Lower leg skin (tissue), 4 donors: ENCODE measurements at regions of chr9 and their contacts with region 1.

Region 1: DNA sequence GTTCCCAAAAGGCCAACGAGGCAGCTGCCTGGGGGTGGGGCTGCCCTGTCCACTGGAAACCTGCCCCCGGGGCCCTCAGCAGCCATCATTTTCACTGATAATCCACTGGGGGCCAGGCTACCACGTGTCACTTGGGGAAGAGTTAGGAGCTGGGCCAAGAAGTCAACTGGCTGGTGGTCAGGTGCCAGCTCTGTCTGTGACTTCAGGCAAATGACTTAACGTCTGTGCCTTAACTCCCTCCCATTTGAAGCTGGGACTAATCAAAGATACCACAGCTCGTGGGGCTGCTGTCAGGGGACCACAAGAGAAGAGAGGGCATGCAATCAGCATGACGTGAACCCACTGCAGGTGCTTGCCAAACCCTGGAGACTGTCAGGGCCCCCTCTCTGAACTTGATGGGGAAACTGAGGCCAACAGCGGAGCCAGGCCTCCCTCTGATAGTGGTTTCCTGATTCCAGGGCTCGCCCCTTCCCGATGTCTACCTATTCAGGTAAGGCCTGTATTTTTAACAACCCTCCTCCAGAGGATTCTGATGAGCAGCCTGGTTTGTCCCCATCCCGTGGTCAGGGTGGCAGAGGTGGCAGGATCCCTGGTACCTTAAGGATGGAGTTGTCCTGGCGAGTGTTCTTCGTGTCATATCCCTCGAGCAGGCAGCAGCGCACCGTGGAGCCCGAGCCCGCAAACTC is 12.3 kb upstream of the DPM2 start:
- DNase-seq: no peak
- H3K4me3 ChIP-seq: no peak overlapping the region
- CTCF ChIP-seq: no peak
- POLR2A ChIP-seq: no peak

Region 2: DNA sequence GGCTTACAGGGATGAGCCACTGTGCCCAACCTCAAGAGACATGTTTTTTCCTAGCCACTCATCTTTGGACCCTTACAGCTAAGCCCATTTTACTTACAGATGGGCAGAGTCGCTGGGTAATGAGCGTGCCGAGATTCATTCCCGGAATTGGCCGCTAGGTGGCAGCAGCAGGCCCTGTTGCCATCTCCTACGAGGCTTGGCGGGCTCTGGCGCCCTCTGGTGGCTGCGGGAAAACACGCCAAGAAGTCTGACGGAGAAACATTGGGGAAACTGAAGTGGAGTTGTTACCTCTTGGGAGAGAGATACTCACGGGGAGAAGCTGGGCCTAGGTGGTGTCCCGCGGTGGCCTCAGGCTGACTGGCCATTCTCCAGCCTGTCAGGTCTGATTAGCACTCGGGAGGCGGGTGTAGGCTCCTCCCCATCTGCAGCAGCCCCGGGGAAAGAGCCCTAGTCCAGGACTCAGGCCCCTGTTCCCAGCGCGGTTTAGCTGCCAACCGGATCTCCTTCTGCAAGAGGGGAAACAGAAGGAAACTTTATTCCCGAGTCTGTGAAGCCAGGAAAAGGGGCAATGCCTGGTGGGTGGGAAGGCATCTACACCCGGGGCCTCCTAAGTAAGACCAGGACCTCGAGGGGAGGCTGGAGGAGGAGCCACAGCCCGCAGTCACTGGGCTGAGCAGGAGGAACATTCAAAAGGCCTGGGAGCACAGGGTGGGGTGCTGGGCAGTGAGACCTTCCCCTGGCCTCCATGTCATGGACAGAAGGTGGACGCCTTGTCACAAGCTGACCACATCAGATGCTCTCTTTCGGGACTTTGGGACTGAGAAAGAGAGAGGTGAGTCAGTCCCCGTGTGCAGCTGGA is 167.9 kb after region 1 on chr9:
- intact Hi-C with region 1: loop called (anchors 5 kb)
- DNase-seq: peak; percentile 90 to 99
- H3K4me3 ChIP-seq: no peak overlapping the region
- CTCF ChIP-seq: peak in 2 of 3 donors; percentile 62 to 100
- POLR2A ChIP-seq: no peak